ENCODE measurements at regions of chr5 and their contacts with region 1.

Region 1: GRCh38 chr5:76691467-76692138 is 24.3 kb upstream of the F2R start:
- DNase-seq: no peak
- H3K4me3 Mint-ChIP-seq: no peak overlapping the region
- H3K27ac Mint-ChIP-seq: peak overlapping the region; percentile 66
- H3K4me1 Mint-ChIP-seq: peaks cover 25% of the 10 kb centered on the region
- H3K27me3 Mint-ChIP-seq: no peaks in the 10 kb centered on the region

Region 2: DNA sequence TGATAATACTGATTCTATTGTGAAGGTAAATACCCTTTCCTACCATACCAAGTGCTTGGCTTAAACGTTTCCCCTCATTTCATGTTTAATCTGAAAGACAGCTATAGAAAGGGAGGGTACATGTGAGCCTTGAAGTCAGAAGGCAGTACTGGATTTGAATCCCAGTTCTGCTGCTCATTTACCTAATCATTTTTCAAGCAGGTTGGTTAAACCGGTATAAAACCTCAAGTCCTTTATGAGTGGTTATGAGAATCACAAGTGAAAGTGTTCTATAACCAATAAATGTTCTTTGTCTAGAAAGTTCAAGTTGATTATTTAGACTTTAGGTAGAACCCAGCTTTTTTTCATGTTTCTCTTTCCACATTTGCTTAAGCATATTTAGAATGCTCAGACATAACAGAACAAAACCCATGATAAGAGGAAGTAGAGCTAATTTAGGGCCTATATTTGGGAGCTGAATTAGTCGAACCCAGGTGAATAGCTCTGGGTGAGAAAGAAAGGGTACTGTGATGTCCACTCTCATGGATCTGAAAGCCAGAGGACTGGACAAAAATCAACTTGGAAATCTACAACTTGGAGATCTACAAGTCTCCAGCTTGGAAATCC is 38.7 kb before region 1 on chr5:
- intact Hi-C with region 1: loop called (anchors 5 kb)
- DNase-seq: no peak
- H3K4me3 Mint-ChIP-seq: no peak overlapping the region
- H3K27ac Mint-ChIP-seq: no peak overlapping the region
- H3K4me1 Mint-ChIP-seq: no peaks in the 10 kb centered on the region
- H3K27me3 Mint-ChIP-seq: no peaks in the 10 kb centered on the region

Region 3: DNA sequence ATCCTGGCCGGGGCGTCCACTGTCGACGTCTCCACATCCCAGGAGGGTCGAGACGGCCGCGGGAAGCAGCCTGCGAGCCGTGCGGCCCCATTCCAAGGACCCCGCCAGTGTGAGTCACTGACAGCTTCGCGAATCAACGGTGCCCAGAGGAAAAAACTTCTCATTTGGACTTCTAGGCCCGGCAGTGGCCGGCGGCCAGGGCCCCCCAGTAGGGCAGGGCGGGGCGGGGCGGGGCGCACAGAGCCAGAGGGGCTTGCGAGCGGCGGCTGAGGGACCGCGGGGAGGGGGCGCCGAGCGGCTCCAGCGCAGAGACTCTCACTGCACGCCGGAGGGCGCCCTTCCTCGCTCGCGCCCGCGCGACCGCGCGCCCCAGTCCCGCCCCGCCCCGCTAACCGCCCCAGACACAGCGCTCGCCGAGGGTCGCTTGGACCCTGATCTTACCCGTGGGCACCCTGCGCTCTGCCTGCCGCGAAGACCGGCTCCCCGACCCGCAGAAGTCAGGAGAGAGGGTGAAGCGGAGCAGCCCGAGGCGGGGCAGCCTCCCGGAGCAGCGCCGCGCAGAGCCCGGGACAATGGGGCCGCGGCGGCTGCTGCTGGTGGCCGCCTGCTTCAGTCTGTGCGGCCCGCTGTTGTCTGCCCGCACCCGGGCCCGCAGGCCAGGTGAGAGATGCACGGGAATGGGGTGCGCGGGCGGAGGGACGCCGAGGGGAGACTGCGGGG is 24.3 kb after region 1 on chr5 and contains the start of gene F2R:
- intact Hi-C with region 1: loop called (anchors 2 kb)
- DNase-seq: peak; percentile 86
- H3K4me3 Mint-ChIP-seq: peak within 1 kb of the TSS; percentile 88
- H3K27ac Mint-ChIP-seq: peak within 1 kb of the TSS; percentile 67
- H3K4me1 Mint-ChIP-seq: peaks cover 25% of the 10 kb centered on the region
- H3K27me3 Mint-ChIP-seq: peaks cover 26% of the 10 kb centered on the region
- total RNA-seq, gene F2R: 2.3 and 2.9 TPM in 2 replicates

Region 4: GRCh38 chr5:76736679-76737556 is 45.3 kb after region 1 on chr5:
- intact Hi-C with region 1: loop called (anchors 1 kb)
- DNase-seq: no peak
- H3K4me3 Mint-ChIP-seq: peak overlapping the region; percentile 17
- H3K27ac Mint-ChIP-seq: peak overlapping the region; percentile 46
- H3K4me1 Mint-ChIP-seq: peaks cover 29% of the 10 kb centered on the region
- H3K27me3 Mint-ChIP-seq: no peaks in the 10 kb centered on the region

Region 5: DNA sequence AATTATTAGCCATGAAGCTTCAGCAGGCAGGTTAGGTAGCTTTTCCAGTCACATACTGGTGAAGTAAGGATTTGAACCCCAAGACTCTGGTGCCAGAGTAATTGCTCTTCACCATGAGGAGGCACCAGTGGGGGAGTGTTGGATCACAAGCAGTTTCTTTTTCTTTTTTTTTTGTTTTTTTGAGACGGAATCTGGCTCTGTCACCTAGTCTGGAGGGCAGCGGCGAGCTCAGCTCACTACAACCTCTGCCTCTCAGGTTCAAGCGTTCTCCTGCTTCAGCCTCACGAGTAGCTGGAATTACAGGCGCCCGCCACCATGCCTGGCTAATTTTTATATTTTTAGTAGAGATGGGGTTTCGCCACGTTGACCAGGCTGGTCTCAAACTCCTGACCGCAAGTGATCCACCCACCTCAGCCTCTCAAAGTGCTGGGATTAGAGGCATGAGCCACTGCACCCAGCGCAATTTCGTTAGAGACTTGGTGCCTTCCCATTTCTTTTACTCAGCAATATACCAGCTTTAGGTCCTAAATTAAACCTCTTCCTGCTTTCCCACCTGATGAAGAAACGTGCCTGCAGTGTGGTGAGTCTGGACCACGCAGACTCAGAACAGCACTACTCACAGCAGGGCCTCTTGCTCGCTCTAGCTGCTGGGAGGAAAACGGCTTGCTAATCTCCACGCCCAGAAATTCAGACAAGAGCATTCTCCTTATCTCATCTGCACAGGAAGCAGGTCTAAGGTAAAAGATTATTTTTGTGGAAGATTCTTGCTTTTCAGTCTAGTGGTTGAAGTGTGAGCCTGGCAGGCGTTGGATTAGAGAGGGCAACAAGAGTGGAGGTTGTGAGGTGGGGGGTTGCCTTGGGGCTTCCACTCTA is 158.1 kb after region 1 on chr5 and contains the start of gene S100Z:
- intact Hi-C with region 1: no loop called
- DNase-seq: peak; percentile 82
- H3K4me3 Mint-ChIP-seq: peak within 1 kb of the TSS; percentile 63
- H3K27ac Mint-ChIP-seq: peak within 1 kb of the TSS; percentile 73
- H3K4me1 Mint-ChIP-seq: peaks cover 31% of the 10 kb centered on the region
- H3K27me3 Mint-ChIP-seq: no peaks in the 10 kb centered on the region
- total RNA-seq, gene S100Z: 1.4 and 1.5 TPM in 2 replicates